Left ventricle myocardium inferior (tissue), 1 donor: ENCODE measurements at regions of chr14 and their contacts with region 1.

Region 1: GRCh38 chr14:74478996-74479635 is 14.0 kb downstream of the NPC2 start:
- DNase-seq: no peak
- H3K4me3 ChIP-seq: no peak overlapping the region
- H3K27ac ChIP-seq: no peak overlapping the region
- H3K4me1 ChIP-seq: peaks cover 13% of the 10 kb centered on the region
- H3K27me3 ChIP-seq: no peaks in the 10 kb centered on the region
- CTCF ChIP-seq: peak; percentile 73

Region 2: GRCh38 chr14:73685328-73685727 is 793.8 kb before region 1 on chr14:
- intact Hi-C with region 1: no loop called
- DNase-seq: no peak
- H3K4me3 ChIP-seq: no peak overlapping the region
- H3K27ac ChIP-seq: no peak overlapping the region
- H3K4me1 ChIP-seq: no peaks in the 10 kb centered on the region
- H3K27me3 ChIP-seq: no peaks in the 10 kb centered on the region
- CTCF ChIP-seq: no peak

Region 3: DNA sequence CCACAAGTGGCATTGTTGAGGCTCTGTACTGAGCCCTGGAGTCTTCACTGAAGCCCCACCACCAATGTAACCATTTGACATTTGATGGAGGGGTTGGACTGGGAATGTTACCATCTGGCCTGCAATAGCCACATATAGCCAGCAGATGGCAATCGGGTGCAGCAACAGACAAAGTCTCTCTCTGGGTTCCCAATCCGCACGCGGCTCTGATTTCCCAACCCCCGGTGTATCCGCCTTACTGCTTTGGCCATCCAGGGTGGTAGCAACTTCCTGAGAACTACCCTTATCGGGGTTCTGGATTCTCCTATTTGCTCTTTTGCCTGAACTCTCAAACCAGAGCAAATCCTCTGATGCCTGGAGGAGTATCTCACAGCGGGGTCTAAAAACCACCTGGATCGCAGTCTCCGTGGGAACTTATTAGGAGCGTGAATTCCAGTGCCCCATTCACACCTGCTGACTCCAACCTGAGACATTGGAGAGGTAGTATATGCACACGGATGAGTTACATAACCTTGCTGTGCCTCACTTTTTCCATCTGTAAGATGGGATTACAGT is 116.7 kb before region 1 on chr14:
- intact Hi-C with region 1: loop called (anchors 5 kb)
- DNase-seq: peak; percentile 73
- H3K4me3 ChIP-seq: no peak overlapping the region
- H3K27ac ChIP-seq: no peak overlapping the region
- H3K4me1 ChIP-seq: no peaks in the 10 kb centered on the region
- H3K27me3 ChIP-seq: peaks cover 59% of the 10 kb centered on the region
- CTCF ChIP-seq: peak; percentile 97